HepG2 (cell line): ENCODE measurements at regions of chr20 and their contacts with region 1.

Region 1: GRCh38 chr20:62953839-62954703 is 1.6 kb downstream of the SLC17A9 start:
- DNase-seq: peak; percentile 95
- ATAC-seq: peak; percentile 69
- H3K4me3 ChIP-seq: peak overlapping the region; percentile 74 to 95 (median 78)
- H3K27ac ChIP-seq: peak overlapping the region; percentile 93
- H3K4me1 ChIP-seq: peaks cover 76% of the 10 kb centered on the region
- H3K27me3 ChIP-seq: no peaks in the 10 kb centered on the region; a peak in 1 of 5 replicates
- CTCF ChIP-seq: peak; percentile 41; the same call in 1 of the 2 replicates
- EP300 ChIP-seq: peak in 1 of 2 experiments; percentile 67; a peak in 2 of 4 replicates
- POLR2A ChIP-seq: peak in 1 of 2 experiments; percentile 55; a peak in 2 of 4 replicates
- RAD21 ChIP-seq: peak; percentile 23; the same call in 1 of the 2 replicates

Region 2: GRCh38 chr20:62822788-62823651 is 131.1 kb before region 1 on chr20:
- CTCF ChIA-PET with region 1: no interaction called
- POLR2A ChIA-PET with region 1: interaction called, 17 read pairs
- in situ Hi-C with region 1: no loop called
- intact Hi-C with region 1: no loop called
- DNase-seq: peak; percentile 98
- ATAC-seq: peak; percentile 61
- H3K4me3 ChIP-seq: peak overlapping the region in 1 of 3 experiments; percentile 71; a peak in 1 of 6 replicates
- H3K27ac ChIP-seq: peak overlapping the region; percentile 59
- H3K4me1 ChIP-seq: peaks cover 68% of the 10 kb centered on the region
- H3K27me3 ChIP-seq: no peaks in the 10 kb centered on the region
- CTCF ChIP-seq: peak; percentile 99
- EP300 ChIP-seq: peak; percentile 18 to 69; a peak in 3 of 4 replicates
- POLR2A ChIP-seq: 0 out of 4 replicates have a peak, but pooled peaks have one; percentile 3 to 35
- RAD21 ChIP-seq: peak; percentile 98

Region 3: GRCh38 chr20:62875419-62876361 is 78.4 kb before region 1 on chr20:
- CTCF ChIA-PET with region 1: no interaction called
- POLR2A ChIA-PET with region 1: interaction called, 59 read pairs
- in situ Hi-C with region 1: no loop called
- intact Hi-C with region 1: loop called (anchors 2 kb)
- DNase-seq: peak; percentile 92
- ATAC-seq: peak; percentile 85
- H3K4me3 ChIP-seq: peak overlapping the region; percentile 8 to 53 (median 13); a peak in 5 of 6 replicates
- H3K27ac ChIP-seq: peak overlapping the region; percentile 48
- H3K4me1 ChIP-seq: peaks cover 67% of the 10 kb centered on the region
- H3K27me3 ChIP-seq: peaks cover 0 to 6% of the 10 kb centered on the region in 2 experiments; a peak in 2 of 5 replicates
- CTCF ChIP-seq: peak; percentile 92
- EP300 ChIP-seq: peak in 1 of 2 experiments; percentile 57; a peak in 1 of 4 replicates
- POLR2A ChIP-seq: peak in 1 of 2 experiments; percentile 59; a peak in 2 of 4 replicates
- RAD21 ChIP-seq: peak; percentile 82

Region 4: GRCh38 chr20:62914970-62915457 is 39.1 kb before region 1 on chr20:
- CTCF ChIA-PET with region 1: no interaction called
- POLR2A ChIA-PET with region 1: interaction called, 54 read pairs
- in situ Hi-C with region 1: no loop called
- intact Hi-C with region 1: no loop called
- DNase-seq: peak; percentile 77
- ATAC-seq: peak; percentile 46
- H3K4me3 ChIP-seq: peak overlapping the region in 1 of 3 experiments; percentile 4; a peak in 1 of 6 replicates
- H3K27ac ChIP-seq: peak overlapping the region; percentile 93
- H3K4me1 ChIP-seq: peaks cover 75% of the 10 kb centered on the region
- H3K27me3 ChIP-seq: no peaks in the 10 kb centered on the region
- CTCF ChIP-seq: no peak
- EP300 ChIP-seq: no peak
- POLR2A ChIP-seq: peak; percentile 16 to 81; a peak in 2 of 4 replicates
- RAD21 ChIP-seq: no peak; the same call in 1 of the 2 replicates

Region 5: GRCh38 chr20:62926239-62927104 is 27.6 kb before region 1 on chr20 and contains the start of gene DIDO1:
- CTCF ChIA-PET with region 1: no interaction called
- POLR2A ChIA-PET with region 1: interaction called, 94 read pairs
- in situ Hi-C with region 1: no loop called
- intact Hi-C with region 1: loop called (anchors 2 kb)
- DNase-seq: peak; percentile 87
- ATAC-seq: peak; percentile 85
- H3K4me3 ChIP-seq: peak within 1 kb of the TSS; percentile 87 to 99 (median 97)
- H3K27ac ChIP-seq: peak within 1 kb of the TSS; percentile 90
- H3K4me1 ChIP-seq: peaks cover 63% of the 10 kb centered on the region
- H3K27me3 ChIP-seq: peaks cover 0 to 5% of the 10 kb centered on the region in 2 experiments; a peak in 1 of 5 replicates
- CTCF ChIP-seq: peak; percentile 84
- EP300 ChIP-seq: no peak
- POLR2A ChIP-seq: peak; percentile 60 to 77; a peak in 3 of 4 replicates
- RAD21 ChIP-seq: peak; percentile 93
- total RNA-seq, gene DIDO1: 75.1 and 77.0 TPM in 2 replicates

Region 6: GRCh38 chr20:62943396-62943795 is 10.7 kb before region 1 on chr20:
- CTCF ChIA-PET with region 1: no interaction called
- POLR2A ChIA-PET with region 1: interaction called, 205 read pairs
- in situ Hi-C with region 1: no loop called
- intact Hi-C with region 1: loop called (anchors 1 kb)
- DNase-seq: no peak
- ATAC-seq: no peak
- H3K4me3 ChIP-seq: no peak overlapping the region
- H3K27ac ChIP-seq: no peak overlapping the region
- H3K4me1 ChIP-seq: peaks cover 32% of the 10 kb centered on the region
- H3K27me3 ChIP-seq: no peaks in the 10 kb centered on the region; a peak in 1 of 5 replicates
- CTCF ChIP-seq: no peak
- EP300 ChIP-seq: no peak
- POLR2A ChIP-seq: no peak
- RAD21 ChIP-seq: no peak

Region 7: DNA sequence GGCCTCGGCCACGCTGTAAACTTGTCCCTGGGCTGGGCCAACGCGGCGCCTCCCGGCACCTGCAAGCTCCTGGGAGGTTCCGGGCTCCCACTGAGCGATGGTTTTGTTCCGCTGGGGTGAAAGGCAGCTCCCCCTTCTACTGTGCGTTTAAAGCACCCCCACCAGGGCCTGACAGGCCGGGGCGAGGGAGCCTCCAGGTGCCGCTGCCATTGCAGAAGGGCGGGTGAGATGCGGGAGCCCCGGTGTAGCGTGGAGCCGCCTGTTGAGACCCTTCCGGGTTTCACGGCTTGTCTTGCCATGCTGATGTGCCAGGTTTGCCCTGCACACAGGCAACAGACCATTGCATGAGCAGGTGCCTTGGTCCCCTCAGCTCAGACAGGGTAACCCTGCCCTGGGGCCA is 341.8 kb after region 1 on chr20:
- CTCF ChIA-PET with region 1: no interaction called
- POLR2A ChIA-PET with region 1: no interaction called
- in situ Hi-C with region 1: no loop called
- intact Hi-C with region 1: no loop called
- DNase-seq: no peak
- ATAC-seq: no peak
- H3K4me3 ChIP-seq: no peak overlapping the region
- H3K27ac ChIP-seq: no peak overlapping the region
- H3K4me1 ChIP-seq: peaks cover 10% of the 10 kb centered on the region
- H3K27me3 ChIP-seq: peaks cover 23 to 77% of the 10 kb centered on the region in 2 experiments; a peak in 4 of 5 replicates
- CTCF ChIP-seq: no peak
- EP300 ChIP-seq: no peak
- POLR2A ChIP-seq: no peak
- RAD21 ChIP-seq: no peak